CD14-positive monocyte (primary cell): ENCODE measurements at regions of chr6 and their contacts with region 1.

Region 1: DNA sequence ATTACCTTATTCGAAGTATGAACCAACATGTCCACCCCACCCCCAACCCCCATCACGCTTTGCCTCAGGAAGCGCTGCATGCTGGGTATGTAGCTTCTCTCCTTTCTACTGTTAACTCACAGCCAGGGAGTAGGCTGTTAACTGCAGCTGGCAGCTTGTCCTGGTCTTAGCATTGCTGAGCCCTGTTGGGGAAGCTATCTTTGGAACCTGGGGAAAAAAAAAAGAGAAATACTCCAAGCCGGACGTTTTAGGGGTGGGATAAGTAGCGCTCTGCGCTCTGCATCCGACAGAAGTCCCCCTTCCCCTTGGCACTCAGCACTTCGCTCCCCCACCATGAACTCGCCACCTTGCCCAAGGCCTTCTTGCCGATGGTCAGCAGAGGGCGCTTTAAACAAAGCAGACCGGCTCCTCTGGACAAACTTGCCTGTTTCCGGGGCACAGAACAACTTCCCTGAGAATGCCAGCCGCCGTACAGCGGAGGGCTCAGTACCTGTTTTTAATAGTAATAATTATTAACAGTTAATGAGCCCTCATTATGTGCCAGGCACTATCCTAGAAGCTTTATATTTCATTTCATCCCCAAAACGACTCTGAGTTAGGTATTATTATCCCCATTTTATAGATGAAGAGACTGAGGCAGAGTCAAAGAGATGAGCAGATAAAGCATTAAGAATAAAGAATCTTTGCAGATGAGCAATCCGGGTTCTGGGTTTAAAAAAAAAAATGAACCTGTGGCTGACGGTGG is 35.2 kb upstream of the MDFI start:
- DNase-seq: peak; percentile 69 to 79 (median 73)
- H3K4me3 ChIP-seq: no peak overlapping the region
- H3K4me3 Mint-ChIP-seq: no peak overlapping the region
- H3K27ac ChIP-seq: no peak overlapping the region
- H3K27ac Mint-ChIP-seq: peak overlapping the region in 1 of 7 donors; percentile 20
- H3K4me1 ChIP-seq: peaks cover 0 to 6% of the 10 kb centered on the region in 2 donors
- H3K4me1 Mint-ChIP-seq: peaks cover 13% of the 10 kb centered on the region
- H3K27me3 ChIP-seq: no peaks in the 10 kb centered on the region
- H3K27me3 Mint-ChIP-seq: peaks cover 2 to 8% (median 6%) of the 10 kb centered on the region in 3 donors
- CTCF ChIP-seq: peak; percentile 85

Region 2: DNA sequence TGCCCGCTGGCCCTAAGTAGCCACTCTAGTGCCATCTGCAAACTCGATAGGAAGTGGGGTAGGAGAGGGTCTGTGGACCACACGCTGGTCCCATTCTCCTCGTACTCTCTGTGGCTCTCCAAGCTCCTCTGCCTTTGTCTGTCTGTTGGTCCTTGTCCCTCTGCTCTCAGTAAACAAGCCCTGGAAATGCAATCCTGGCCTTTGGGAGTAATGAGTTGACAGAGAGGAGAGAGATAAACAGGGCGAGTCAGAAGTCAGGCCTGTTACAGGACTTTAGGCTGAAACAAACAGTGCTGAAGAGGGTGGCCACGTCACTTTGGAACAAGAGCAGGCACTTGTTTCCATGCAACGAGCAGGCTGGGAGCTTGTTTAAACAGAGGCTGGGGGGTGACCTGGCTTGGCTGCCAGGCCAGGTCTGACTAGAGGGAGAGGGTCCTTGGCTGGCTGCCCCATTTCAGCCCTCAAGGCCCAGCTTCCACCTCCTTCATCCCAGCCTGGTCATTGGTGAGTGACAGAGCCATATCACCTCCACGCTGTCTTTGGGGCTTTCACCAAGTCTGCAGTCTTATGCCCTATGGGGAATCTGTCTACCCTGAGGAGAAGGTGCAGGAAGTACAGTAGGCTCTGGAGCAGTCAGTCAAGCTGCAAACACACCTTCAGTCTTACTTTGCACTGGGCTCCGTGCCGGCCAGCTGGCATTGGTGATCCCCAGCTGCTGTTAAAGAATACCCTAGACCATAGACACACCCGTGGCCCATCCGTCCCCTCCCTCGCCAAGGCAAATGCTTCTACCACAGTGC is 34.3 kb before region 1 on chr6:
- intact Hi-C with region 1: no loop called
- DNase-seq: no peak
- H3K4me3 ChIP-seq: no peak overlapping the region
- H3K4me3 Mint-ChIP-seq: no peak overlapping the region
- H3K27ac ChIP-seq: no peak overlapping the region
- H3K27ac Mint-ChIP-seq: peak overlapping the region in 3 of 7 donors; percentile 2 to 47 (median 7)
- H3K4me1 ChIP-seq: no peaks in the 10 kb centered on the region
- H3K4me1 Mint-ChIP-seq: peaks cover 9% of the 10 kb centered on the region
- H3K27me3 ChIP-seq: no peaks in the 10 kb centered on the region
- H3K27me3 Mint-ChIP-seq: peaks cover 1 to 6% (median 6%) of the 10 kb centered on the region in 3 donors
- CTCF ChIP-seq: no peak

Region 3: GRCh38 chr6:41683510-41684310 is 80.7 kb after region 1 on chr6:
- intact Hi-C with region 1: loop called (anchors 2 to 5 kb)
- DNase-seq: peak; percentile 59 to 73 (median 61)
- H3K4me3 ChIP-seq: peak overlapping the region; percentile 40 to 77 (median 56)
- H3K4me3 Mint-ChIP-seq: peak overlapping the region; percentile 83 to 88
- H3K27ac ChIP-seq: no peak overlapping the region
- H3K27ac Mint-ChIP-seq: peak overlapping the region in 3 of 7 donors; percentile 54 to 77 (median 63)
- H3K4me1 ChIP-seq: peaks cover 22 to 23% of the 10 kb centered on the region in 2 donors
- H3K4me1 Mint-ChIP-seq: peaks cover 18% of the 10 kb centered on the region
- H3K27me3 ChIP-seq: no peaks in the 10 kb centered on the region
- H3K27me3 Mint-ChIP-seq: peaks cover 1 to 8% (median 3%) of the 10 kb centered on the region in 3 donors
- CTCF ChIP-seq: peak; percentile 96

Region 4: DNA sequence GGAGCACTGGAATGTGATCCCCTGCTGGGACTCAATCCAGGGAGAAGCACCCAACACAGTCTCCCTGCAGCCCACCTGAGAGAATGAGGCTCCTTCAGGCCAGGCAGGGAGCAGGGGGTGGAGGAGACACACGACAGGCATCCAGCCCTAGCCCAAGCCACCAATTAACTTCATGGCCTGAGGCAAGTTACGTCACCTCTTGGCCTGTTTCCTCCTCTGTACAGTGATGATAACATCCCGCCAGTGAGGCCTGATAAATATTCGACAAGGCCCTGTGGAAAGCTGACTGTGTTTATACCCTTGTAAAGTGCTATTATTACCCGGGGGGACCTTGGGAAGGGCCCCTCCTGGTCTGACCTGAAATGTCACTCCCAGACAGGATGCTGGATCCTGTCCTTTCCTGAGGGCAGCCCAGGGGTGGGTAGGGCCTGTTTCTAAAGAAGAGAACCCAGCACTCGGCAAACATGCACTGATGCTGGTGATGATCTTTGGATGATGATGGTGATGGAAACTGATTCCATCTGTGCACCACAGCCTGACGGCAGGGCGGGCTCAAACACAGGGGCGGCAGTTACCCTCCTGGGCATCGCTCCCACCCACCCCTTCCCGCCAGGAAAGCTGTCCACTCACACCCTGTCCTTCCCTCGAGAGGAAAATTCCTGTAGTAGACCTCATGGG is 164.3 kb after region 1 on chr6:
- intact Hi-C with region 1: loop called (anchors 10 kb)
- DNase-seq: no peak
- H3K4me3 ChIP-seq: no peak overlapping the region
- H3K4me3 Mint-ChIP-seq: no peak overlapping the region
- H3K27ac ChIP-seq: no peak overlapping the region
- H3K27ac Mint-ChIP-seq: peak overlapping the region in 2 of 7 donors; percentile 46 to 77
- H3K4me1 ChIP-seq: no peaks in the 10 kb centered on the region
- H3K4me1 Mint-ChIP-seq: peaks cover 2% of the 10 kb centered on the region
- H3K27me3 ChIP-seq: no peaks in the 10 kb centered on the region
- H3K27me3 Mint-ChIP-seq: peaks cover 0 to 4% (median 0%) of the 10 kb centered on the region in 3 donors
- CTCF ChIP-seq: no peak

Region 5: DNA sequence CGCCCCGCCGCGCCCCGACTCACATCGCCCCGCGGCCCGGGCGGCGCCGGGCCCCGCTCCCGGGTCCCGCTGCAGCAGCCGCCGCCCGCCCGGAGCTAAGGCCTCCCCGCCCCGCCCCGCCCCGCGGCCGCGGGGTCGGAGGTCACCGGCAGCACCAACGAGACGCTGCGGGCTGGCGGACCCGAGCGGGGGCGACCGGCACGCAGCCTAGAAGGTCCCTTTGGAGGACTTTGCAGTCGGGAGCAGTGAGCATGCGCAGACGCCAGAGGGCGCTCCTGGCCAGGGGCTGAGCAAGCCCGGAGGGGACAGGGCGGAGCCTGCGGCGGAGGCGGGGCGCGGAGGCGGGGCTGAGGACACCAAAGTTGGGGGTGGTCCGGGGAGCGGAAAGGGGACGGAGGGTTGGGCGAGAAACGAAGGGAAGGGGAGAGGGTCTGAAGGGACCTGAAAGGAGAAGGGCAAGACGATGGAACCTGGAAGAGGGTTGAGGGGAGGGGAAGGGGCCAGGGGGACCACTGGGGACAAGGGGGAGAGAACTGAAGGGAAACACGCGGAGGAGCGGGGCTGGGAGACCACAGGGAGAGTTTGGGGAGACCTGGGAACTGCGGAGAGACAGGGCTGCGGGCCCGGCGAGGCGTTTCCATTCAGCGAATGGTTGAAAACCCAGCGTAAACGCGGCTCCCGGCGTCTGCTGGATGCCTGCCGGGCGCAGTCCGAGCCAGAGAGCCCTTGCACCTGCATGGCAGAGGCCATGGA is 176.9 kb after region 1 on chr6 and contains the start of gene FRS3:
- intact Hi-C with region 1: loop called in 1 of 2 experiments (anchors 10 kb)
- DNase-seq: peak; percentile 94 to 96 (median 95)
- H3K4me3 ChIP-seq: peak within 1 kb of the TSS; percentile 61 to 84 (median 80)
- H3K4me3 Mint-ChIP-seq: peak within 1 kb of the TSS; percentile 89 to 92
- H3K27ac ChIP-seq: peak within 1 kb of the TSS in 1 of 2 donors; percentile 57
- H3K27ac Mint-ChIP-seq: peak within 1 kb of the TSS in 6 of 7 donors; percentile 56 to 91 (median 83)
- H3K4me1 ChIP-seq: peaks cover 56 to 74% of the 10 kb centered on the region in 2 donors
- H3K4me1 Mint-ChIP-seq: peaks cover 59% of the 10 kb centered on the region
- H3K27me3 ChIP-seq: peaks cover 0 to 3% of the 10 kb centered on the region in 2 donors
- H3K27me3 Mint-ChIP-seq: peaks cover 3 to 13% (median 6%) of the 10 kb centered on the region in 3 donors
- CTCF ChIP-seq: peak; percentile 78
- polyA plus RNA-seq, gene FRS3: 1.3 to 7.0 (median 2.6) TPM